Posterior vena cava (tissue), 2 donors: ENCODE measurements at regions of chr3 and their contacts with region 1.

Region 1: DNA sequence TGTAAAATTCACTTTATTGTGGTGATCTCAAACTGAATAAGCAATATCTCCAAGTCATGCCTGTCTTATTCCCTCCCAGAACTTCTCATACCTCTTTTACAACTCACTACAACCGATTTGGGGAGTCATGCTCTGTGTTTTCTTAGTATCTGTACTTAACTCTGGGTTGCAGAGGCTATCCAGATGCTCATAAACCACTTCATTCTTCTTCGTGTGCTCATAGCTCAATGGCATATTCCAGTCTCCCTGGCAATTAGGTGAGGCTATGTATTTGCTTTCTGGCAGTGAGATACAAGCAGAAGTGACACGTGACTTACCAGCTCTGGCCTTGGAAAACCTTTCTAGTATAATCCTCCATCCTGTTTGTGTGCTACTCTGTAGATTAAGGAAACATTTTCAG is 360.9 kb downstream of the ZNF385D start:
- DNase-seq: no peak

Region 2: DNA sequence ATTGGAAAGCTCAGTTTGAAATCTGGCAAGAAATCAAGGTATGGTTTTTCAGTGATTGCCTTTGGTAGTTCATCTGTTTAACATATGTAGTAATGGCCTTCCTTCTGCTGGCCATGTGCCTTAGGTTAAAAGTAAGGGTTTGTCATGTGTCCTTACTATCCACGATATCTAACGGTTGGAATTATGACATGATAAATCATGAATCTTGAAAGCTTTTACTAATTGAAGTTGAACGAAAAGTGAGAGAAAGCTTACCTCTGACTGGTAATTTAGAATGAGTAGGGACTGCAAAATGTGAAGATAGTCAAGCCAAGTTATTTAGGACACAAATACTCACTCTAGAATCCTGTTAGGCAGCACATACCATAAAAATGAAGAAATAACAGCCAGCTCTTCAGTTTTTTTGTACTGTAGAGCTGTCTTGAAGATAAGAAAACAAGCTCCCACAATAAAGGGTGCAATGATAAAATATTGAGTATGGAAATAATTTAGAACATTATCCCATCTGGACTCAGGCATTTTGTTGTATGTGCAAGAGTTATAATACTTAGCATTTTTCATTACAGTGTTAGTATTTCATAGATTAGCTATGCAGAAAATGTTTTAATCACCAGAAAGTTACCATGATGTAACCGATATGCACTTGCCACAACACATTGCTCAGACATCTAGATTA is 57.5 kb after region 1 on chr3:
- intact Hi-C with region 1: loop called in 1 of 2 experiments (anchors 2 kb)
- DNase-seq: no peak